IMR-90 (cell line): ENCODE measurements at regions of chr10 and their contacts with region 1.

Region 1: DNA sequence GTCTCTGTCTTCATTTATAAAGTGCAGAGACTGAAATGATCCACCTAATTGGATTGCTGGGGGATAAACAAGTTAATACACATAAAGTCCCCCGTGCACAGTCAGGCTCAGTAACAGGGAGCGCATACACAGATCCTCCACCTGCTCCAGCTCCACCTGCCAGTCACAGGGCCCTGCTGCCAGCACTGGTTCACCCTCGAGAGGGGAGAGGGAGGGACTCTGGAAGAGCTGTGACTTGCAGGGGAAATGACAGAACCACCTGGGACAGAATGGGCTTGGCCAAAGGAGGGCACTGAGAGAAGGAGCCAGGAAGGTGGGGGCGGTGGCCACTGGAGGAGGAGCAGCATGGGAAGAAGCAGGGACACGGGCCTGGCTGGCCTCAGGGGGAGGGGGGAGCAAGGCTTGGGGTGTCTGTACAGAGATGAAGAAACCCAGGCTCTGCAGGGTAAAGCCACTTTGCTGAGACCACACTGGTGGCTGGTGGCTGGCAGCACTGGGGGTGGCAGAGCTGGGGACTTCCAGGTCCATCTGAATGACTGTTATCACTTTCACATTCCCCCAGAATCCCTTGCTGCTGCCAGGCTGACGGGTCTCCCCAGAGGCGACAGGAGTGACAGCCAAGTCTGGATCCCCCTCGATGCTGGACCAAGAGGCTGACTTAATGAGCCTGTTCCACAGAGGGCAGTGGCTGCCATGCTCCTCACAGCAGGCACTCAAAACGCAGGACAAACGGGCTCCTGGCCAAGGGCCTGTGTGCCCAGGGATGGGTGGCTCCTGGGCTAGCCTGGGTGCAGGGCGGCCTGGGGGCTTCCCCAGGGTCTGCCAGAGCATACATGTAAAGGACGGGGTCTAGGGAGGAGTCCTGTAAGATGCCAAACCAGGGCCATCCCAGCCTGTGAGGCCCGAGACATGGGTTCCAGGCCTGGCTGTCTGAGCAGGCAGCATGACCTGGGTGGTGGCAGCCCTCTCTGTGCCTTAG is 151.1 kb downstream of the SH3PXD2A start:
- DNase-seq: no peak
- ATAC-seq: no peak
- H3K4me3 ChIP-seq: no peak overlapping the region
- H3K27ac ChIP-seq: no peak overlapping the region
- H3K4me1 ChIP-seq: peaks cover 3% of the 10 kb centered on the region
- H3K27me3 ChIP-seq: no peaks in the 10 kb centered on the region
- CTCF ChIP-seq: no peak
- POLR2A ChIP-seq: no peak
- RAD21 ChIP-seq: no peak

Region 2: GRCh38 chr10:103645141-103646054 is 58.8 kb before region 1 on chr10:
- CTCF ChIA-PET with region 1: no interaction called
- POLR2A ChIA-PET with region 1: interaction called, 12 read pairs
- dilution Hi-C with region 1: no loop called
- in situ Hi-C with region 1: no loop called
- intact Hi-C with region 1: no loop called
- DNase-seq: peak; percentile 99
- ATAC-seq: peak; percentile 86
- H3K4me3 ChIP-seq: no peak overlapping the region
- H3K27ac ChIP-seq: peak overlapping the region; percentile 59
- H3K4me1 ChIP-seq: peaks cover 33% of the 10 kb centered on the region
- H3K27me3 ChIP-seq: no peaks in the 10 kb centered on the region
- CTCF ChIP-seq: no peak
- POLR2A ChIP-seq: peak; percentile 55; the same call in 1 of the 2 replicates
- RAD21 ChIP-seq: no peak